Caco-2 (cell line): ENCODE measurements at regions of chr16 and their contacts with region 1.

Region 1: GRCh38 chr16:65671-66137 is 6.7 kb downstream of the RHBDF1 start:
- DNase-seq: peak; percentile 67 to 83
- H3K4me3 ChIP-seq: no peak overlapping the region
- H3K4me3 Mint-ChIP-seq: no peak overlapping the region
- H3K27ac Mint-ChIP-seq: no peak overlapping the region
- H3K4me1 ChIP-seq: peaks cover 6% of the 10 kb centered on the region
- H3K4me1 Mint-ChIP-seq: no peaks in the 10 kb centered on the region
- H3K27me3 ChIP-seq: no peaks in the 10 kb centered on the region
- H3K27me3 Mint-ChIP-seq: no peaks in the 10 kb centered on the region
- CTCF ChIP-seq: peak; percentile 91 to 95

Region 2: DNA sequence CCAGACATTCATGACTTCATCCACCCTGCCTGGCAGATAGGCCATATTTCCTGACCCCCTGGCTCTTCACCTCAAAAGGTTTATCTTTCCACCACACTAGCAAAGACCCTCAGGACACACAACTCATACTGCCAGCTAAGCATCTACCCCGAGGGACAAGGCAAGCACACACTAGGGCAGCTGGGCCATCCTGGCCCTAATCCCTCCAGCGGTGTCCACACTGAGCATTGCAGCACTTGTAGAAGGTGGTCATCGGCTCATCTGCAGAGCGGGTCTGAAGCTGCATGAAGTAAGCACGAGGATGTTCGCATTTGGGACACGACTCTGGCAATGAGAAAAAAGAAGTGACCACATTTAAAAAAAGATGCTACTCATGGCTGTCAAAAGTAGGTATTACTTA is 18.5 kb before region 1 on chr16:
- CTCF ChIA-PET with region 1: no interaction called
- POLR2A ChIA-PET with region 1: no interaction called
- intact Hi-C with region 1: no loop called
- DNase-seq: no peak
- H3K4me3 ChIP-seq: no peak overlapping the region
- H3K4me3 Mint-ChIP-seq: no peak overlapping the region
- H3K27ac Mint-ChIP-seq: no peak overlapping the region
- H3K4me1 ChIP-seq: no peaks in the 10 kb centered on the region
- H3K4me1 Mint-ChIP-seq: no peaks in the 10 kb centered on the region
- H3K27me3 ChIP-seq: no peaks in the 10 kb centered on the region
- H3K27me3 Mint-ChIP-seq: no peaks in the 10 kb centered on the region
- CTCF ChIP-seq: no peak

Region 3: GRCh38 chr16:77807-78443 is 12.2 kb after region 1 on chr16 and contains the start of gene MPG:
- CTCF ChIA-PET with region 1: interaction called, 11 read pairs
- POLR2A ChIA-PET with region 1: no interaction called
- intact Hi-C with region 1: no loop called
- DNase-seq: peak; percentile 84 to 88
- H3K4me3 ChIP-seq: peak within 1 kb of the TSS; percentile 84
- H3K4me3 Mint-ChIP-seq: peak within 1 kb of the TSS; percentile 75
- H3K27ac Mint-ChIP-seq: peak within 1 kb of the TSS; percentile 66
- H3K4me1 ChIP-seq: peaks cover 24% of the 10 kb centered on the region
- H3K4me1 Mint-ChIP-seq: peaks cover 4% of the 10 kb centered on the region
- H3K27me3 ChIP-seq: no peaks in the 10 kb centered on the region
- H3K27me3 Mint-ChIP-seq: no peaks in the 10 kb centered on the region
- CTCF ChIP-seq: no peak
- total RNA-seq, gene MPG: 39.1 and 41.1 TPM in 2 replicates

Region 4: GRCh38 chr16:129075-129474 is 63.4 kb after region 1 on chr16:
- CTCF ChIA-PET with region 1: no interaction called
- POLR2A ChIA-PET with region 1: no interaction called
- intact Hi-C with region 1: no loop called
- DNase-seq: no peak
- H3K4me3 ChIP-seq: no peak overlapping the region
- H3K4me3 Mint-ChIP-seq: no peak overlapping the region
- H3K27ac Mint-ChIP-seq: no peak overlapping the region
- H3K4me1 ChIP-seq: no peaks in the 10 kb centered on the region
- H3K4me1 Mint-ChIP-seq: no peaks in the 10 kb centered on the region
- H3K27me3 ChIP-seq: no peaks in the 10 kb centered on the region
- H3K27me3 Mint-ChIP-seq: no peaks in the 10 kb centered on the region
- CTCF ChIP-seq: no peak